AG04450 (cell line): ENCODE measurements at regions of chr3 and their contacts with region 1.

Region 1: GRCh38 chr3:196739671-196740480 is at the start of gene PAK2:
- DNase-seq: peak; percentile 54
- H3K4me3 ChIP-seq: peak within 1 kb of the TSS; percentile 81
- H3K27ac ChIP-seq: peak within 1 kb of the TSS; percentile 59
- H3K27me3 ChIP-seq: no peaks in the 10 kb centered on the region
- CTCF ChIP-seq: no peak
- polyA plus RNA-seq, gene PAK2: 51.0 and 52.2 TPM in 2 replicates

Region 2: DNA sequence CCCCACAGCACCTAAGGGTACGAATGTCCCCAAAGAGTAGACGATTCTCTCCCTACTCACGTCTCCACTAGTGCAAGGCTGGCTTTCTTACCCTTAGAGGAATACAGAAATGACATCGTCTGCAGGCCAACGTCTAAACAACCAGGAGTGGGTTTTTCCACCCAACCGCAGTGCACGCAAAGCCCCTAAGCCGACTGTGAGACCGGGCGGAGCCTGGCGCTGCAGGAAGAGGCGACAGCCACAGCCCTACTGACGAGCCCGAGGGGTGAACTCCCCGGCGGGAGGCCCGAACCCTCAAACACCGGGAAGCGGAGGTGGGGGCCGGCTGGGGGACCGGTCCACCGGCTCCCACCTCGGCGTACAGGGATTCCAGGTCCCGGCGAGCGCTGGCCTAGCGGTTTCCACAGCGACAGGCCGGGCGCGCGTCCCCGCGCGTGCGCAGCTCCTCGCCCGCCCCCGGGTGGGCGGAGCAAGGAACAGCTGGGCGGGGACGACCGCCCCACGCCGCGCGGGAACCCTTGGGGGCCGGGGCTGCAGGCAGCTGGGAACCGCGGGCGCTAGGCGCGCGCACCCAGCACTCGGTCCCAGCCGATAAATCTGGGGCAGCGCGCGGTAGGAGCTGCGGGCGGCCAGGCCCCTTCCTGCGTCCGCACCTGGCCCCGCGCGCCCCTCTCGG is 27.9 kb before region 1 on chr3 and contains the starts of genes CEP19 and PIGX:
- CTCF ChIA-PET with region 1: no interaction called
- POLR2A ChIA-PET with region 1: interaction called, 12 read pairs
- DNase-seq: peak; percentile 57
- H3K4me3 ChIP-seq: peak within 1 kb of the TSS; percentile 90
- H3K27ac ChIP-seq: peak within 1 kb of the TSS; percentile 86
- H3K27me3 ChIP-seq: no peaks in the 10 kb centered on the region
- CTCF ChIP-seq: no peak
- polyA plus RNA-seq, gene CEP19: 2.0 and 3.4 TPM in 2 replicates
- polyA plus RNA-seq, gene PIGX: 8.5 and 12.7 TPM in 2 replicates

Region 3: DNA sequence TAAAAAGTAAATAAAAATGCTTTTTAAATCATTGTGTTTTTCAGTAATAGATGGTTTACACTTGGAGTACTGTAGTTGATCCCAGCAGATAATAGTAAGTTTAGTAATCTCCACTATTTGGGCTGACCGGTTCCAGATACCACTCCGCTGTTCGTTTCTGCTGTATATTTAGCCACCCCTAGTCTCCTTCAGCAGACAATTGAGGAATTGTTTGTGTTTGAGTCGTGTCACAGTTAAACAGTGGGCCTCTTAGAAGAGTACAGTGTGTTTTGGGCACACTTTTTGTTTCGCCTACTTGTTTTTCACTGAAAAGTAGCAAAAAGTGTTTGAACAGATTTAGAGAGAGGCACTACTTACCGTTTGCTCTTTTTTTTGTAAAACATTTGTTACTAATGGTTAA is 33.0 kb after region 1 on chr3:
- CTCF ChIA-PET with region 1: no interaction called
- POLR2A ChIA-PET with region 1: no interaction called
- DNase-seq: no peak
- H3K4me3 ChIP-seq: no peak overlapping the region
- H3K27ac ChIP-seq: no peak overlapping the region
- H3K27me3 ChIP-seq: no peaks in the 10 kb centered on the region
- CTCF ChIP-seq: no peak

Region 4: GRCh38 chr3:196867507-196868296 is 127.8 kb after region 1 on chr3 and contains the start of gene SENP5:
- CTCF ChIA-PET with region 1: no interaction called
- POLR2A ChIA-PET with region 1: interaction called, 11 read pairs
- DNase-seq: peak; percentile 45
- H3K4me3 ChIP-seq: peak within 1 kb of the TSS; percentile 88
- H3K27ac ChIP-seq: peak within 1 kb of the TSS; percentile 82
- H3K27me3 ChIP-seq: no peaks in the 10 kb centered on the region
- CTCF ChIP-seq: no peak
- polyA plus RNA-seq, gene SENP5: 18.0 and 18.3 TPM in 2 replicates